AG04449 (cell line): ENCODE measurements at regions of chr6 and their contacts with region 1.

Region 1: GRCh38 chr6:113879186-113880096 is 22.3 kb downstream of the MARCKS start:
- DNase-seq: no peak
- H3K4me3 ChIP-seq: no peak overlapping the region
- CTCF ChIP-seq: peak; percentile 63

Region 2: GRCh38 chr6:113909234-113909856 is 29.9 kb after region 1 on chr6:
- CTCF ChIA-PET with region 1: interaction called, 13 read pairs
- POLR2A ChIA-PET with region 1: no interaction called
- DNase-seq: peak; percentile 45
- H3K4me3 ChIP-seq: no peak overlapping the region
- CTCF ChIP-seq: peak; percentile 25